ENCODE measurements at regions of chr17 and their contacts with region 1.

Region 1: DNA sequence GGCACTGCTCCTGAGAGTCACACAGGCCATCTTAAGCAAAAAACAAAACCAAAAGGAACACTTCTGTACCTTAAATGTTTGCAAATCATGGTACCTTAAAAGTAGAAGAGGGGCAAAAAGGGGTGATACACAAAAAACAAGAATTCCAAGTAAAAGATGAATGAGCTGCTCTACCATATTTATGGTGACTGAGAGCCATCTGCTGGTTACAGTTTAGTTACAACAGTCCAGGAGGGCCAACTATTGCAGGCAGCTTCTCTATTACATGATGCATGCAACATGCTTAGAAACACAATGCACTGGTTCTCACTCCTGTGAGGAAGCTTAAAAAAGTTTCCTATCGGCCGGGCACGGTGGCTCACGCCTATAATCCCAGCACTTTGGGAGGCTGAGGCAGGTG is 53.5 kb downstream of the STX8 start:
- DNase-seq: no peak
- ATAC-seq: no peak

Region 2: DNA sequence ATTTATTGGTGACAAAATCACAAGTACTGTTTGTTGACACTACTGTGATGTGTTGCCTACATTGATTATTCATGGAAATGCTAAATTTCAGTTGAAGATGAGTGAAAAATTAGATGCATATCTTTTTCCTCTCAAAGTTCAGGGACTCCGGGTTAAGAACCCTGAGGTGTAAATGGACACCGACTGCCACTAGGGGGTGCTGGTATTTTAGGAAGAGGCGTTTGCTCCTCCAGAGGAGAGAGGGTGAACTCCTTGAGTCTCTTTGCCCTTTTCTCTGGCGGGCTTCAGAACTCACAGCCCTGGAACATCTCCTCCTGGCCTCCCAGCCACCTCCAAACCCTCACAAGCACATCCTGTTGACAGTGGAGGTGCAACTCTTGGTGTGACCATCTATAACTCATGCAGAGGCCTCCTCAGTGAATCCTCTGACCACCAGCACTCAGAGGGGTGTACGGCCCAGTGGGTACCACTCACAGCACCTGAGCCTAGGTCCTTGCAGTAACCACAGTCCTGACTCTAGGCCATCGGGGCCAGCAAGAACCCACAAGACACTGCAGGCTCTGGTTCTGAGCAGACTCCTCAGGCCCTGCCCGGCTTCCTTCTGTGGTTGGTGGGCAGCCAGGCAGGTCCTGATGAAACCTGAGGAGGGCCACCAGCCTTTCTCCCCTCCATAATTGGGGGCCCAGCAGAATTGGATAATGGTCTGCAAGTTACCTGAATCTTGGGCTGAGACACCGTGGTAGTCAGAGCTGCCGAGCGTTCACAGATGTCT is 530.4 kb before region 1 on chr17:
- intact Hi-C with region 1: loop called (anchors 2 kb)
- DNase-seq: no peak
- ATAC-seq: peak; percentile 63

Region 3: DNA sequence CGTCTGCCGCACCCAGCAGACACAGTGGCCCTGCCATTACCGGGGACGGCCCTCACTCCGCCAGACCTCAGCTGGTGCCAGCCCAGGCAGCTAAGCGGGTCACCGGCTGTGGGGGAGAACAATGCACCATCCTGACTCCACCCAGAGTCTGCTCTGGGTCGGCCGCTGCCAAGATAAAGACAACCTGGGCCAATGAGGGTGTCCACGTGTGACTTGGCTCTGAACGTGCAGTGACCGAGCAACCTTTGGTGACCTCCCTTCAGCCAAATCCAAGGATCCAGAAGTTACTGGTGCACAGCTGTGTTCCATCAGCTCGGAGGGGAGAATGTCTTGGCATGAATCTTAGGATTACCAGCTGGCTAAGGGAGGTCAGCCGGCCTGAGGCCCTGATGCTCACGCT is 344.9 kb before region 1 on chr17:
- intact Hi-C with region 1: loop called (anchors 10 kb)
- DNase-seq: no peak
- ATAC-seq: peak; percentile 40

Region 4: DNA sequence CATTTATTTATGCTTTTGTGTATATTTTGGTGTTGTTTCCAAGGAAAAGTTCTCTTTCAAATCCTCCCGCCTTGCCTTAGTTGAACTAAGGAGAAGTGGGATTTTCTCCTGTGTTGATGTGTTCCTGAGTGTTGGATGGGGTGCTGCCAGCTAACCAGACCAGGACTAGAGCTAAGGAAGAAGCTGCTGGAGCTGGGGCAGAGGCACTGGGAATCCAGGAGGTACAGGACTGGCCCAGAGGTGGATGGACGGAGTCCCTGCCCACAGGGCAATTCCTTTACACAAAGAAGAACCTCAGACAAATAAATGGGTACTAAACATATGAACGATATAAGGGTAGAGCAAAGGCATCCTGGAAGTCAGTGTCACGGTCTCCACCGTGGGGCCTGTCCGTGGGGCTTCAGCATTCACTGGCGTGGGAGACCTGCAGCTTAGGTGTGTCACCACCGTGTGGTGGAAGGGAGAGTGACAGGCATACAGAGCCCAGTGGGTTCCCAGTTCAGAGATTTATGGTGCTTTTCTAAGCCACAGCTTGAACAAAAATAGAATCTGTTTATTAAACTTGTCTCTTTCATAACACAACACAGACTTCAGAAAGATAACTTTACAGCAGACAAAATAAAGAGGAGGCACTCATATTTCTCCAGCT is 230.0 kb before region 1 on chr17:
- intact Hi-C with region 1: loop called (anchors 10 kb)
- DNase-seq: peak; percentile 70
- ATAC-seq: peak; percentile 86

Region 5: DNA sequence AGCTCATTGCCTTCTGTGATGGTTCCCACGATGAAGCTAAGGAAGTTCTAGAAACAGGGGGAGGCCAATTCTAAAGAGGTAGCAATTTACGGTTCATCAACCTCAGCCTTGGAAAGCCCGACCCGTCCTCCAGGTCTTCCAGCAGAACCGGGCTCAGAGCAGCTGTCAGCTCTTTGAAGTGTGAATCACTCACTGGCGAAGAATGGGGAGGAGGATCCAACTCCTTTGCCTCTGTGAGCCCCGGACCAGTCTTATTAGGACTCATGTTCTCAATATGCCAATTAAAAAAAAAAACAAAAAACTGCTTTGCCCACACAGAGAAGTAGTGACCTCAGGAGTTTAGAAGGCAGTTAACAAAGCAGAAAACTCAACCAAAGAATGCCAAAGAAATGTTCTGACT is 22.1 kb after region 1 on chr17:
- intact Hi-C with region 1: no loop called
- DNase-seq: no peak
- ATAC-seq: no peak